ENCODE measurements at regions of chr9 and their contacts with region 1.

Region 1: DNA sequence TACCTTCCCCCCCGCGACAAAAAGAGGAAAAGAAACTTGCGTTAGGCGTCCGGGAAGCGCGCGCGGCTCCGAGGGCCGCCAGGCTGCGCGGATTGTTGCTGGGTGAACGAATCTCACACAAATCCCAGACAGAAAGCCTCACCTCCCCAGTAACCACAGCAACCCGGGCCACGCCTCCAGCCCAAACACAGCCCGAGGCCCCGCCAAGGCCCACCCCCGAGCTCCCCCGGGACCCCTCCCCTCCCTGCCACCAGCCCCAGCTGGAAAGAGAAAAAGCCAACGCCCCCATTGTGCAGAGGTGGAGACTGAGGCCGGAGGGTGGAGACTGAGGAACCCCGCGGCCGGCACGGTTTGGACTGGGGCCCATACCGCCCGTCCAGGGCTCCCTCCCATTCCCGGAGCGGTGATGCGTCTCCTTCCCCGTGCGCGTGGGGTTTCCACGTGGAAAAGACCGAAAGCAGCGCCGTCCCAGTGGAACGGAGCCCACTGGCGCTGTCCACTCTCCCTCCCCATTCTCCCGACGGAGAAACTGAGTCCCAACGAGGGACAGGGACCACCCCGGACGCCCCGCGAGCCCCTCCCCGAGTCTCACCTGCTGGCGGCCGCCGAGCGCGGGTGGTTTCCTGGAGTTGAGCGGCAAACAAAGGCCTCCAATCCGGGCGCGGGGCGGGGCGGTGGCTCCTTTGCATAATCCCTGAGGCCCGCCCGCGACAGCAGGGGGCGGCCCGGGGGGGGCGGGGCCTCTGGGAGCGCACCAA is 10.2 kb upstream of the AKNA start:
- DNase-seq: peak; percentile 93 to 99
- H3K4me3 ChIP-seq: peak overlapping the region; percentile 69 to 70
- H3K27ac ChIP-seq: peak overlapping the region; percentile 78 to 86
- H3K4me1 ChIP-seq: peaks cover 9 to 26% of the 10 kb centered on the region in 2 donors
- H3K27me3 ChIP-seq: no peaks in the 10 kb centered on the region
- CTCF ChIP-seq: peak in 1 of 3 experiments; percentile 10

Region 2: GRCh38 chr9:114385412-114386181 is 12.4 kb before region 1 on chr9:
- intact Hi-C with region 1: loop called (anchors 2 kb)
- DNase-seq: peak; percentile 86 to 94
- H3K4me3 ChIP-seq: peak overlapping the region; percentile 76 to 77
- H3K27ac ChIP-seq: peak overlapping the region; percentile 86 to 96
- H3K4me1 ChIP-seq: peaks cover 36 to 69% of the 10 kb centered on the region in 2 donors
- H3K27me3 ChIP-seq: no peaks in the 10 kb centered on the region
- CTCF ChIP-seq: no peak

Region 3: GRCh38 chr9:114587385-114588202 is 189.6 kb after region 1 on chr9 and contains the start of gene ATP6V1G1:
- intact Hi-C with region 1: loop called (anchors 5 kb)
- DNase-seq: peak; percentile 98 to 100
- H3K4me3 ChIP-seq: peak within 1 kb of the TSS; percentile 79 to 85
- H3K27ac ChIP-seq: peak within 1 kb of the TSS; percentile 78 to 84
- H3K4me1 ChIP-seq: peaks cover 5 to 40% of the 10 kb centered on the region in 2 donors
- H3K27me3 ChIP-seq: no peaks in the 10 kb centered on the region
- CTCF ChIP-seq: no peak
- total RNA-seq, gene ATP6V1G1: 135 TPM

Region 4: DNA sequence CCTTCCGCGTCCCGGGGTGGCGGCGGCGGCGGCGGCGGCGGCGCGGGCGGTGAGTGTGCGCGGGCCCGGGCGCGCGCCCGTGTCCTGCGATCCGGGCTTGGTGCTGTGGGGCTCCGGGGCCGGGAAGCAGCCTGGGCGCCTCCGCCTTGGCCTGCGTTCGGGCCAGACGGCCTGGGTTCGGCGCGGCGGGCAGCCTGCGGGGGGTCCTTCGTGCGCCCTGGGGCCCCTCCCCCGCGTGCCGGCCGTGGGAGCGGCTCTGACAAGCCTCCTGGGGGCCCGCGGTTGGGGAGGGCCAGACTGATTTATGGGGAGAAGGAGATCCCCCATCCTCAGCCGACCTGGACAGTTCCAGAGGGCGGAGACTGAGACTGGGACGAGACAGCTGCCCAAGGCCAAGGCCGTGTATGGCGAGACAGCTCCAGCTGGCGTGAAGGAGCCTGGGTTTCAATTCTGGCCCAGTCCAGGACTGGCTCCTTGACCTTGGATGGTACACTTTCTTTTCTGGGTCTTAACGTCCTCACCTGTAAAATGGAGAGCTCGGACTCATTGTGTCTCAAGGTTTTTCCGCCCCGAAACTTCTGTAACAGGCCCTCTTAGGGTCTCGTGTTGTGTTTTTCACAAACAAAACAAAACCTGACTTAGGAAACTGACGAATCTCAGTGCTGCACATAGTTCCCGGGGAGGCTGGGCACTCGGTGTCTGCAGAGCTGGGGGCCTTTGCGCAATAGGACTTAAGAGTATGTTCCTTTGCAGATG is 213.7 kb after region 1 on chr9:
- intact Hi-C with region 1: loop called (anchors 5 kb)
- DNase-seq: peak in 1 of 2 donors; percentile 74
- H3K4me3 ChIP-seq: peak overlapping the region; percentile 67 to 94
- H3K27ac ChIP-seq: peak overlapping the region; percentile 82 to 97
- H3K4me1 ChIP-seq: peaks cover 4 to 17% of the 10 kb centered on the region in 2 donors
- H3K27me3 ChIP-seq: no peaks in the 10 kb centered on the region
- CTCF ChIP-seq: no peak

Region 5: DNA sequence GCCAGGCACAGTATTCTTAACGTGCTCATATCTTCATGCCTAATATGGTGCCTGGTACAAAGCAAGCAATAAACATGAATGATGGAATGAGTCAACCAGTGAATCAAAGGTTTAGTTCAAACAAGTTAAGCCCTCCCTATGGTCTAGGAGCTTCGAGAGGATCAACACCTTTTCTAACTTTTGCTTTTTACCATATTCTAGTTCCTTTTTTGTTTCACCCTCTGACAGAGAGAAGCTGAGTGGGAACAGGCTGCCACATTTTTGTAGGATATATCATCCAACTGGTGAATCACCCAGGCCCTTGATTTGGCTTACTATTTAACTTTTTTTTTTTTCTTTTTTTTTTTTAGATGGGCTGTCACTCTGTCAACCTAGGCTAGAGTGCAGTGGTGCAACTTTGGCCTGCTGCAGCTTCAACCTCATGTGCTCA is 759.2 kb after region 1 on chr9:
- intact Hi-C with region 1: loop called (anchors 10 kb)
- DNase-seq: peak in 1 of 2 donors; percentile 70
- H3K4me3 ChIP-seq: no peak overlapping the region
- H3K27ac ChIP-seq: peak overlapping the region; percentile 64 to 86
- H3K4me1 ChIP-seq: peaks cover 4 to 22% of the 10 kb centered on the region in 2 donors
- H3K27me3 ChIP-seq: no peaks in the 10 kb centered on the region
- CTCF ChIP-seq: no peak

Region 6: DNA sequence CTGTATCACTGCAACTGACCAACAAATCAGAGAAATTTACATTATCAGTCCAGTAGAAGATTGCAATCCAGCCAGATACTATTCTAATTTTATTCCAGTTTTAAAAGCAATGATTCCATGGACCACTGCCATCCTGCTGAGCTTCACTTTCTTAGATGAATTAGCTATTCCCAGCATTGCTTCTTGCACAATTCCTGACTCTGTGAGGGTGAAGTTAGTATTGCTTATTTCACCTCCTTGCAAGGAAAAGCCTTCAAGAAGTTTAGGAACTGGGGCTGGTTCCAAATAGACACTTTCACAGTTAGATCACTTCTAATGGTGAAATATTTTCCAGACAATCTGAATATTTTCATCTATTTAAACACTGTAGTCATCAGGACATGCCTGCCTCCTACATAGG is 1058.5 kb after region 1 on chr9:
- intact Hi-C with region 1: loop called (anchors 5 kb)
- DNase-seq: peak in 1 of 2 donors; percentile 68
- H3K4me3 ChIP-seq: no peak overlapping the region
- H3K27ac ChIP-seq: peak overlapping the region; percentile 9 to 35
- H3K4me1 ChIP-seq: peaks cover 5 to 14% of the 10 kb centered on the region in 2 donors
- H3K27me3 ChIP-seq: no peaks in the 10 kb centered on the region
- CTCF ChIP-seq: no peak

Region 7: GRCh38 chr9:116149844-116150243 is 1751.8 kb after region 1 on chr9:
- intact Hi-C with region 1: loop called (anchors 10 kb)
- DNase-seq: no peak
- H3K4me3 ChIP-seq: no peak overlapping the region
- H3K27ac ChIP-seq: no peak overlapping the region
- H3K4me1 ChIP-seq: no peaks in the 10 kb centered on the region
- H3K27me3 ChIP-seq: no peaks in the 10 kb centered on the region
- CTCF ChIP-seq: peak; percentile 28 to 58 (median 43)